ENCODE measurements at regions of chr11 and their contacts with region 1.

Region 1: DNA sequence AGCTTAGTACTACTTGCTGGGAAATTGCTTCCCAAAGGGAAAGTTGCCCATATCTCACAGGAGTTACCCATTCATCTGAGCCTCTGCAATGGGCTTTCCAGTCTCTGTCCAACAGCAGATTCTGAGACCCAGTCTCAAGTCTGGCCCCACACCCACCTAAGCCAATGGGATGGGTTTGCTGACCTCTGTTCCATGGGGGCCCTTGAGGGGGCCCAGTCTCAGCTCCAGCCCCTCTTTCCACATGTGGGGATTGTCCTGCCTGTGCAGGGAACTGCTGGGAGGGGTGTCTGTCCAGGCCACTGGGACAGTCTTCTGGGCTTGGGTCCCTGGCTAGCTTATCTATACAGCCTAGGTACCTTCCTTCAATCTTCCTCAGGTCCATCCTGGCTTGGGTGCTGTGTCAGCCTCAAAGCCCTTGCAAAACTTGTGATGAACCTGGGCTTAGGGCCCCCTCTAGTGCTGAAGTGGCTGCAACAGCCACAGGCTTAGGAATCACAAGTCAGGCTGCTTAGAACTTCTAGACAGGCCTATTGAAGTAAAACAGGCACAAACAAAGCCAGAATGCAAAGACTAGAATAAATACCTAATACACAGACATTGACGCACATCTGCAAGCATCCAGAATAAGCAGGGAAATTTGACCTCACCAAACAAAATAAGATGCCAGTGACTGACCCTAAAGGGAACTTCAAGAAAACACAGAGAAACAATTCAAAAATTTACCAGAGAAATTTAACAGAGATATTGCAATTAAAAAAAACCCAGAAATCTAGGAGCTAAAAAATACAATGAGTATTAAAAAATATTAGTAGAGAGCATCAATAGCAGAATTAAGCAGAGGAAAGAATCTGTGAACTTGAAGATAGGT is 11.7 kb upstream of the PATL1 start:
- DNase-seq: peak; percentile 31
- H3K4me3 ChIP-seq: no peak overlapping the region
- CTCF ChIP-seq: peak; percentile 87

Region 2: GRCh38 chr11:59534676-59535075 is 145.8 kb before region 1 on chr11:
- CTCF ChIA-PET with region 1: interaction called, 58 read pairs
- POLR2A ChIA-PET with region 1: no interaction called
- DNase-seq: no peak
- H3K4me3 ChIP-seq: no peak overlapping the region
- CTCF ChIP-seq: no peak

Region 3: DNA sequence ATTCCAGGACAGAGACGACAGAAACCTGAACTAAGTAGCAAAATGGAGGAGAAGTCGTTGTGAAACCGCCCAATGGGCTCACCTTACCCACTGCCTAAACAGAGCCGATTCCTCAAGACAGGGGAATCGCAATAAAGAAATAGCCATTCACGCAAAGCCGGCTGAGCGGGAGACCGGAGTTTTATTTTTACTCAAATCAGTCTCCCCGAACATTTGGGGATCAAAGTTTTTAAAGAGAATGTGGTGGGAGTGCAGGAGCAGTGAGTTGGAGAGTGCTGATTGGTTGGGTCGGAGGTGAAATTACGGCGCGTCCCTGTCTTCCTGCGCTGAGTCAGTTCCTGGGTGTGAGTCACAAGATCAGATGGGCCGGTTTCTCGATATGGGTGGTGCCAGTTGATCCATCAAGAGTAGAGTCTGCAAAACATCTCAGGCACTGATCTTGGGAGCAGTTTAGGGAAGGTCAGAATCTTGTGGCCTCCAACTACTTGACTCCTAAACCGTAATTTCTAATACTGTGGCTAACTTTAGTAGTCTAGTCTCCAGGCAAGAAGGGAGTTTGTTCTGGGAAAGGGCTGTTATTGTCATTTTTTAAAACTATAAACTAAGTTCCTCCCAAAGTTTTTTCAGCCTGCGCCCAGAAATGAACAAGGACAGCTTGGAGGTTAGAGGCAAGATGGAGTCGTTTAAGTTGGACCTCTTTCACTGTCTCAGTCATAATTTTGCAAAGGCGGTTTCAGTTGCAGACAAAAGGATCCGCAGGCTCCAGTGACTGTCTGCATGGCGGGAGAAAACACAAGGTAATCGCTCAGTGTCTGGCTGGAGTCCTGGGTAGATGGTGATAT is 135.1 kb before region 1 on chr11:
- CTCF ChIA-PET with region 1: interaction called, 58 read pairs
- POLR2A ChIA-PET with region 1: no interaction called
- DNase-seq: no peak
- H3K4me3 ChIP-seq: no peak overlapping the region
- CTCF ChIP-seq: no peak

Region 4: DNA sequence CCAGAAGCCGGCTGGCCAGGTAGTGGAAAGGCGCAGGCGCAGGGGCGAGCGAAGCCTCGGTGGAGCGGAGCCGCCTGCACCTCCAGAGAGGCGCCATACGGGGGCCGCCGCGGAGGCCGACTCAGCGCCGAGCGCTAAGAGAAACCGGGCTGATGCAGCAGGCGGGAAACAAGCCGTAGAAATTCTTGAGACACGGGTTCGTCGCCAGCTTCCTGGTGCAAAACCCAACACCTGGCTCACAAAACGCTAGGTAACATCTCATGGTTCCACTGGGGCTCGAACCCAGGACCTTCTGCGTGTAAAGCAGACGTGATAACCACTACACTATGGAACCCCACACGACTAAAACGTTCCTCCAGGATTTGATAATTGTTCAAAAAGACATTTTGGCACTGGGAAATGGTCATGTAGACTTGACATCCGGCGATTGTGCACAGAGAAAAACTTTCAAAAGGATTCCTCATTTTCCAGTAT is 130.1 kb before region 1 on chr11:
- CTCF ChIA-PET with region 1: interaction called, 12 read pairs
- POLR2A ChIA-PET with region 1: no interaction called
- DNase-seq: peak; percentile 82
- H3K4me3 ChIP-seq: peak overlapping the region; percentile 71
- CTCF ChIP-seq: peak; percentile 71

Region 5: DNA sequence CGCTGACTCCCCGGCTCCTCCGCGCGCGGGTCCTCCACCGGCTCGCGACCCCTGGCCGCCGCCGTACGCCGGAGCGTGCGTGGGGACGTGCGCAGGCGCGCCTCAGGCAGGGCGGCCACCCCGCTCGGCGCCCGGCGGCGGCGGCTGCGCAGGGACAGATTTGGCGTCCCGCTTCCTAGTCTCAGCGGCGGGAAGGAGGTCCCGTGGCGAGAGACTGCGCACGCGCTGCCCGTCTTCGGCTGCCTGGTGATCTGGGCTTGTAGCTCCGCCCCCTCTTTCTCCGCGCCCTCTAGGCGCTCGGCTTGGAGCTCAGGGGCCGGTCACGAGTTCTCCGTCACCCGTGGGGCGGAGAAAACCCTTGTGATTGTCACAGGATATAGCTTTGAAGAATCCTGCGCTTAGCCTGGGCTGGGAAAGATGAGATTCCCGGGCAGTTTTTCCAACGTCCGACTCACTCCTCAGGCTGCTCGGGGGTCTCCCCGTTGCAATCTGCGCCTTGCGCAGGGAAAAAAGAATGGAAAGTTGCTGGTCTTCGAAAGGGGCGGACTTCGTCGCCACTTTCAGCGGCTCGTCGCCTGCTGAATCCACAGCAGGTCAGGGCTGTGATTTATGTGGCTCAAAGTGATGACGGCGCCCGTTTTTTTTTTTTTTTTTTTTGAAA is 11.4 kb before region 1 on chr11 and contains the start of gene PATL1:
- CTCF ChIA-PET with region 1: interaction called, 32 read pairs
- POLR2A ChIA-PET with region 1: no interaction called
- DNase-seq: peak; percentile 81
- H3K4me3 ChIP-seq: peak within 1 kb of the TSS; percentile 81
- CTCF ChIP-seq: no peak

Region 6: DNA sequence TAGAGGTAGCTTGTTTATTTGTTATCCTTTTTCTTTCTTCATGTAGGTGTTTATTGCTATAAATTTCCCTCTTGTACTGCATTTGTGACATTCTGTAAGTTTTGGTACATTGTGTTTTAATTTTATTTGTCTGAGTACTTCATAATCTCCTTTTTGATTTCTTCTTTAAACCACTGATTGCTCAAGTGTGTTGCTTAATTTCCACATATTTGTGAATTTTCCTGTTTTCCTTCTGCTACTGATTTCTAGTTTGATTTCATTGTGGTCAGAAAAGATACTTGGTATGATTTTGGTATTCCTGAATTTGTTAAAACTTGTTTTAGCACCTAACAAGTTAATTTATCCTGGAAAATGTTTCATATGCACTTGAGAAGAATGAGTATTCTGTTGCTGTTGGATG is 18.0 kb after region 1 on chr11:
- CTCF ChIA-PET with region 1: interaction called, 11 read pairs
- POLR2A ChIA-PET with region 1: no interaction called
- DNase-seq: no peak
- H3K4me3 ChIP-seq: no peak overlapping the region
- CTCF ChIP-seq: no peak

Region 7: DNA sequence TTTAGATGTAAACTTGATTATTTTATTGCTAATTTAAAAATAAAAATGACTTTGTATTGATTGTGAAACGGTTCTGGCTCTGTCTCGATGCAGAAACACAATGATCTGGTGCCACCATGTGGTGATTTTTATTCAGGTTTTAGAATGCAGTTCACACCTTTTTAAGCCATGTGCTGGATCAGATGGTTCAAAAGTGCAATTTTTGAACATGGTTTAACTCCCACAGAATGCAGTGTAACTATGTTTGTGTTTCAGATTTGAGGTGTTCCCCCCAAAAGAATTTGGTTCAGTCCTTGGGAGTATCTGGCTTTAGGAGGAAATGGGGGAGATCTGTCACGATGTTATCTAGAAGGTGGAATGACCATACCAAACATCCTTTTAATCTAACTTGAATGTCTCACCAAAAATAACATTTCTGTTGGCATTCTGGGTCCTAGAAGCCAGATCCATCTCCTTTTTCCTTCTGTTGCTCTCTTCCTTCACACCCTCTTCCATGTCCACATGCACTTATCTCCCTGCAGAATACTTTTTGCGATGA is 122.2 kb after region 1 on chr11:
- CTCF ChIA-PET with region 1: interaction called, 13 read pairs
- POLR2A ChIA-PET with region 1: no interaction called
- DNase-seq: no peak
- H3K4me3 ChIP-seq: no peak overlapping the region
- CTCF ChIP-seq: peak; percentile 37

Region 8: DNA sequence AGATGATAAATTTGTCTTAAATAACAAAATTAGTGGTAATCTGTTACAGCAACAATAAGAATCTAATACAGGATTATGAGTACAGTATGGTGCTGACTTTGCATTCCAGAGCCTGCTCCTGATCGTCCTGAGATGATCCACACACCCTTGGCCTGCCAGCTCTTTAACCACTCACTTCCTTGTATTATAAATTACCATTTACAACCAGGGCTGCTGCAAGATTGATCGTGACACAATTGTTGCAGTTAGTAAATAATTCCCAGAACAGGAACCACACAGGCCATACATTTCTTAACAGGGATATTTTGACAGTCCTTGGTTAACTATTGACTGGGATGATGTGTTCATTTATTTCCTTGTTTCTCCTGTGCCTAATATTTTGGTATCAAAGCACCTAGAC is 168.6 kb after region 1 on chr11:
- CTCF ChIA-PET with region 1: no interaction called
- POLR2A ChIA-PET with region 1: no interaction called
- DNase-seq: no peak
- H3K4me3 ChIP-seq: no peak overlapping the region
- CTCF ChIP-seq: no peak

Measured in AG04449 (cell line).